Activated CD4-positive, alpha-beta T cell treated with anti-CD3 and anti-CD28 coated beads for 36 hours (primary cell): ENCODE measurements at regions of chr5 and their contacts with region 1.

Region 1: DNA sequence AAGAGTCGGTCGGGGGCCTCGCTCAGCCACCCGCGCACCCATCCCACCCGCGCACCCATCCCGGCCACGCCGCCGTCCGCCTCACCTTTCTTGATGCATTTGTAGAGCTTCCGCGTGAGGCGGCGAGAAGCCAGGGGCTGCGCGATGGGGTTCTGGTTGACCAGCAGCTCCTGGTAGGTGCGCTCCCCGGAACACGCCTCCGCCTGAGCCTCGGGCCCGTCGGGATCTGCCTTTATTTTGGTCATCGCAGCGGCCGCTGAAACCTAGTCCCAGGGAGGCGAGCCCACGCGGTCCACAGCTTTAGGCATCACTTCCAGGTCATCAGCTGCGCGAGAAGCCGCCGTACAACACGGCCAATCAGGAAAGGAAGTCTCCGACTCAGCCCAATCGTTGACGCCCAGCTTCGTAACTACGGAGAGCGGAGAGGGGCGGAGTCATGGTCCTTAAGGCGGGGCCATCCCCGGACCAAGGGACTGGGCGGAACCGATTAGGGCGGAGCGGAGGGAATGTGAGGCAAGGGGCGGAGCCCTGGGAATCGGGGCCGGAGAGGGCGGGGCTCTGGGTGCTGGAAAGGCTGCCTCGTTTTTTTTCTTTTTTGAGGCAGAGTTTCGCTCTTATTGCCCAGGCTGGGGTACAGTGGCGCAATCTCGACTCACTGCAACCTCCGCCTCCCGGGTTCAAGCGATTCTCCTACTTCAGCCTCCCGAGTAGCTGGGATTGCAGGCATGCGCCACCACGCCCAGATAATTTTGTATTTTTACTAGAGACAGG is at the start of gene NHP2:
- DNase-seq: peak; percentile 99
- ATAC-seq: peak; percentile 99
- H3K4me3 Mint-ChIP-seq: peak within 1 kb of the TSS; percentile 97
- H3K27ac Mint-ChIP-seq: peak within 1 kb of the TSS; percentile 86
- H3K4me1 Mint-ChIP-seq: peaks cover 46% of the 10 kb centered on the region
- H3K27me3 Mint-ChIP-seq: no peaks in the 10 kb centered on the region
- total RNA-seq, gene NHP2: 244 TPM

Region 2: GRCh38 chr5:177516604-177517568 is 636.9 kb before region 1 on chr5 and contains the start of gene DDX41:
- CTCF ChIA-PET with region 1: no interaction called
- POLR2A ChIA-PET with region 1: no interaction called
- intact Hi-C with region 1: loop called in 1 of 2 experiments (anchors 5 kb)
- DNase-seq: peak; percentile 98
- ATAC-seq: peak; percentile 91
- H3K4me3 Mint-ChIP-seq: peak within 1 kb of the TSS; percentile 98
- H3K27ac Mint-ChIP-seq: peak within 1 kb of the TSS; percentile 96
- H3K4me1 Mint-ChIP-seq: peaks cover 48% of the 10 kb centered on the region
- H3K27me3 Mint-ChIP-seq: no peaks in the 10 kb centered on the region
- total RNA-seq, gene DDX41: 192 to 197 TPM

Region 3: DNA sequence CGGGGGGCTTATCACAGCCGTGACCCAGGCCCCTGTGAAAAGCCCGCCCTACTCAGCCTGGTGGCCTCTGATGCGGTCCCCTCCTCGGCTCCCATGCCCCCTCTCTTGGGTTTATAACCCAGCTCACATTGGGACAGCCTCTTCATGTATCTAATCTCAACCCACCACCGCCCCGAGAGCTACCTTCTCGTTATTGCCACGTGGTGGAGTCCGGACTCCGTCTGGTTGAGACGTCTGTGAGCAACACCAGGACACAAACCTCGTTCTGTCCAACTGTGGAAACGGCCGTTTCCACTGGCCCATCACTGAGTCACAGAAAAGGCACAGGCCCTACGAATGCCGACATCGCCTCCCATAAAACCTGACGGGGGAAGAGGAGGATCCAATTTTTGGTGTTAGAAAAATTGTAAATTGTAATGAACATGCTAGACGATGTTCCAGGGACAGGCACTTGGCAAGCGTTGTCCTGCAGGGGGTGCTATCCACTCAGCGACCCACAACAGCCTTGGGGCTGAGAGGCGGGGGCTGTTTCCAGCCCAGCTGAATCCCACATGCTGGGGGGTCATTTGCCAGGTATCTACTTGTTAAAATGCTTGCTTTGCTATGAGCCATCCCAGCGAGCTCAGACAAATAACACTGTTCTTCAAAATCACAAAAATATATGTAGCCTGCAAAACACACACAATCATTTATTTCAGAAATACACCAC is 77.8 kb before region 1 on chr5:
- CTCF ChIA-PET with region 1: interaction called, 137 read pairs
- POLR2A ChIA-PET with region 1: interaction called, 3 read pairs
- intact Hi-C with region 1: no loop called
- DNase-seq: peak; percentile 90
- ATAC-seq: peak; percentile 91
- H3K4me3 Mint-ChIP-seq: peak overlapping the region; percentile 26
- H3K27ac Mint-ChIP-seq: no peak overlapping the region
- H3K4me1 Mint-ChIP-seq: peaks cover 3% of the 10 kb centered on the region
- H3K27me3 Mint-ChIP-seq: peaks cover 3% of the 10 kb centered on the region

Region 4: GRCh38 chr5:178120868-178121357 is 32.8 kb before region 1 on chr5:
- CTCF ChIA-PET with region 1: interaction called, 17 read pairs
- POLR2A ChIA-PET with region 1: interaction called, 3 read pairs
- intact Hi-C with region 1: loop called in 1 of 2 experiments (anchors 2 kb)
- DNase-seq: peak; percentile 94
- ATAC-seq: peak; percentile 94
- H3K4me3 Mint-ChIP-seq: no peak overlapping the region
- H3K27ac Mint-ChIP-seq: no peak overlapping the region
- H3K4me1 Mint-ChIP-seq: peaks cover 22% of the 10 kb centered on the region
- H3K27me3 Mint-ChIP-seq: no peaks in the 10 kb centered on the region

Region 5: DNA sequence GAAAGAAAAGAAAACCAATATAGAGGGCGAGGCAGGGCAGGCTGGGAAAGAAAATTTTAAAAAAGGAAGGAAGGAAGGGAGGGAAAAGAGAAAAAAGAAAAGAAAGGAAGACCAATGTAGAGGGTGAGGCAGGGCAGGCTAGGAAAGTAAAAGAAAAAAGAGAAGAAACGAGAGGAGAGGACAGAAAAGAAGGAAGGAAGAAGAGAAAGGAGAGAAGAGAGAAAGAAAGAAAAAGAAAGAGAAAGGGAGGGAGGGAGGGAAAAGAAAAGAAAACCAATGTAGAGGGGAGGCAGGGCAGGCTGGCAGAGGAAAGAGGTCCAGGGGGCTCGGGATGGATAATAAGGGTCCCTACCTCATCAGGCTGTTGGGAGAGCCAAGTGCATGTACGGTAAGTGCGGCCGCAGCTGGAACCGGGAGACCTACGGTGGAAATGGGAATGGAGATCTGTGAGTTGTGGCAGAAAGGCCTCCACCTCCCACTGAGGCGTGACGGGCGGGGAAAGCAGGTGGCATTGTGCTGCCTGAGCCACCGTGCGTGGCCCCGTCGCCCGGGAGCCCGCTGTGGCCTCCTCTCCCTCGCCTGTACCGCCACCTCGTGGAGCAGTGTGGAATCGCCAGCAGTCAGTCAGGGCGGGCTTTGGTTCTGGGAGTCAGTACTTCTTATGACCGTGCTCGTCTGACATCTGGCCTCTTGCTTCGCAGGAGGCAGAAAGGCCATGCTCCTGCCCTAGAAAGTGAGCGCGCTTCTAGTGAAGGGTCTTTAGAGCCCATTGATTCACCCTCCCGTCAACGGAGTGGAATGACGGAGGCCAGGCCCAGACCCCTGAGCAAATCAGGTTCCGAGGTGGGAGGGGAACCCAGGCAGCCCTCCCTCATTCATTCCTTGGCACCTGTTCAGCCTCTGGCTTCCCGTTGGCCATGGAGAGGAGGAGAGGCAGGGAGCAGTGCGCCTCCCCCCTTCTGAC is 10.3 kb after region 1 on chr5:
- CTCF ChIA-PET with region 1: interaction called, 10 read pairs
- POLR2A ChIA-PET with region 1: interaction called, 5 read pairs
- intact Hi-C with region 1: no loop called
- DNase-seq: peak; percentile 95
- ATAC-seq: peak; percentile 99
- H3K4me3 Mint-ChIP-seq: peak overlapping the region; percentile 20
- H3K27ac Mint-ChIP-seq: no peak overlapping the region
- H3K4me1 Mint-ChIP-seq: peaks cover 3% of the 10 kb centered on the region
- H3K27me3 Mint-ChIP-seq: peaks cover 23% of the 10 kb centered on the region

Region 6: GRCh38 chr5:178232124-178232919 is 78.6 kb after region 1 on chr5 and contains the start of gene PHYKPL:
- CTCF ChIA-PET with region 1: no interaction called
- POLR2A ChIA-PET with region 1: no interaction called
- intact Hi-C with region 1: loop called in 1 of 2 experiments (anchors 1 kb)
- DNase-seq: peak; percentile 81
- ATAC-seq: peak; percentile 70
- H3K4me3 Mint-ChIP-seq: peak within 1 kb of the TSS; percentile 80
- H3K27ac Mint-ChIP-seq: peak within 1 kb of the TSS; percentile 84
- H3K4me1 Mint-ChIP-seq: peaks cover 56% of the 10 kb centered on the region
- H3K27me3 Mint-ChIP-seq: no peaks in the 10 kb centered on the region
- total RNA-seq, gene PHYKPL: 67.2 to 68.4 TPM